Adrenal gland (tissue), 19 donors: ENCODE measurements at regions of chr21 and their contacts with region 1.

Region 1: GRCh38 chr21:36209626-36210171 is 53.1 kb downstream of the DOP1B start:
- DNase-seq: peak in 6 of 7 donors; percentile 44 to 70 (median 58)
- H3K4me3 ChIP-seq: no peak overlapping the region
- H3K27ac ChIP-seq: peak overlapping the region in 2 of 5 donors; percentile 46 to 71
- H3K4me1 ChIP-seq: peaks cover 0 to 3% of the 10 kb centered on the region in 2 donors
- H3K27me3 ChIP-seq: no peaks in the 10 kb centered on the region
- CTCF ChIP-seq: peak; percentile 21 to 66 (median 56)
- POLR2A ChIP-seq: no peak

Region 2: DNA sequence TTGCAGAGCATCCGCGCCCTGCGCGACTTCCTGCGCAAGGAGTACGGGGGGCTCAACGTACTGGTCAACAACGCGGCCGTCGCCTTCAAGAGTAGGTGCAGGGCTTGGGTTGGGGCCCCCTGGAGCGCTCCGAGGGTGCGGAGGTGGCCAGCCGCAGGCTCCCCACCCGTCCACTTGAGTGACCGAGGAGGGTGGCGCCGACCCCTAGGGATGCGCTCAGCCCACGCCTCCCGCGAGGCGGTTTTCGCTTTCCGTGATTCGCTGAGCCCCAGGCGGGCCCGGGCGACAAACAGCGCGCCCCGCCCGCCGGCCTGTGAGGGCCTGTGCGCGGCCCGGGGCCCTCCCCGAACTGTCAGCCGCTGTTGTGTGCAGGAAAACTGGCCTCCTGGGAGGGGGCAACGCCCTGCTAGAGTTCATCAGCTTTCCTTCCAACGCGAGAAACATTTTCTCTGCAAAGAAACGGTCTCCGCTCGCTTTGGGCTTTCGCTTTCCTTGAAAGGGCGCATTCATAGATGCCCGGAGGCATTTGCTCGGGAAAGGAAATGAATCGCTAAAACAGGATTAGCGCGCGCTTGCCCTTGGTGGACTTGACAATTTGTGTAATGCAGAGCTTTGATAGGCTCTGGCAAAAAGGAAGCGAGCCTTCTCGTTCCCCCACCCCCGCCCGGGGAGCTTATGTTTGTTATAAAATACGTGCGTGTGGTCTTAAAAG is 74.2 kb before region 1 on chr21:
- intact Hi-C with region 1: loop called (anchors 5 to 10 kb)
- DNase-seq: peak; percentile 39 to 82 (median 62)
- H3K4me3 ChIP-seq: peak overlapping the region in 3 of 4 donors; percentile 8 to 71 (median 67)
- H3K27ac ChIP-seq: peak overlapping the region in 4 of 5 donors; percentile 34 to 89 (median 52)
- H3K4me1 ChIP-seq: peaks cover 3 to 18% of the 10 kb centered on the region in 2 donors
- H3K27me3 ChIP-seq: no peaks in the 10 kb centered on the region
- CTCF ChIP-seq: no peak
- POLR2A ChIP-seq: no peak

Region 3: DNA sequence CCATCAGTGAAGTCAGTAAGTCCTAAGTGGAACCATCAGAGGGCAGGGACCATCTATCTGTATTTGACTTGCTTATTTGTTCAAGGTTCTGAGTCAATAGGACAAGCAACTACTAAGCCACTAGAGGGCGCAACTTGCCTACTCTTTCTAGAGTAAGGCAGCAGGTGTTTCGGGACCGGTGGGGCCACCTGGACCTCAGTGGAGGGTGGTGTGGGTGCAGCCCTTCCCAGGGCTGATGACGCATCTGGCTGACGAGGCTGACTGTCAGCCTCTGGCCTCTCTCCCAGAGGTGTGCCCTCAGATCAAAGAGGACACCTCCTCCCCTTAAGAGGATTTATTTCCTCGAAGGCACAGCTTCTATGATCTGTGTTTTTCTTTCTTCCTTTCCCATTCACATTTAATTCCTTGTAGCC is 68.2 kb before region 1 on chr21:
- intact Hi-C with region 1: loop called (anchors 5 to 10 kb)
- DNase-seq: peak; percentile 81 to 92 (median 88)
- H3K4me3 ChIP-seq: no peak overlapping the region
- H3K27ac ChIP-seq: no peak overlapping the region
- H3K4me1 ChIP-seq: no peaks in the 10 kb centered on the region
- H3K27me3 ChIP-seq: no peaks in the 10 kb centered on the region
- CTCF ChIP-seq: peak; percentile 74 to 86 (median 82)
- POLR2A ChIP-seq: no peak